ENCODE measurements at regions of chr6 and their contacts with region 1.

Region 1: DNA sequence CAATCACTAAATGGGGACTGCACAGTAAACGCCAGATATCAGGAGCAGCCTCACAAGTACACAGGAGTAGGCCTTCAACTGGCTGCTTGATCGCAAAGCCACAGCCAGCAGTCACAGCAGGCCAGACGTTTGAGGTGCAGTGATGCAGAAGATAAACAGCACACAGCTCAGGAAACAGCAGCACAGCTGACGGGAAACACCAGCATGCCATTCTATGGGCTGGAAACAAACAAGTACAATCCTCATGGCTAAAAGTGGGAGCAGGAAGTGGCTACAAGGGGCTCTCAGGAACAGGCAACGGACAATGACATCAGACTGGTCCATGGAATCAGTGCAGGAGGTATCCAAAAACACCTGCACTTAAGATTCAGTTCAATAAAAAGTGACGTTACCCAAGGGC is 111.0 kb downstream of the DTNBP1 start:
- DNase-seq: peak; percentile 92
- H3K4me3 ChIP-seq: no peak overlapping the region
- H3K27ac ChIP-seq: peak overlapping the region; percentile 62
- H3K4me1 ChIP-seq: peaks cover 42% of the 10 kb centered on the region
- H3K27me3 ChIP-seq: no peaks in the 10 kb centered on the region
- CTCF ChIP-seq: no peak
- POLR2A ChIP-seq: no peak

Region 2: GRCh38 chr6:15504581-15505350 is 47.0 kb before region 1 on chr6:
- CTCF ChIA-PET with region 1: no interaction called
- POLR2A ChIA-PET with region 1: no interaction called
- dilution Hi-C with region 1: no loop called
- intact Hi-C with region 1: loop called (anchors 5 kb)
- DNase-seq: peak; percentile 91
- H3K4me3 ChIP-seq: peak overlapping the region in 1 of 3 experiments; percentile 1
- H3K27ac ChIP-seq: no peak overlapping the region
- H3K4me1 ChIP-seq: peaks cover 11% of the 10 kb centered on the region
- H3K27me3 ChIP-seq: no peaks in the 10 kb centered on the region
- CTCF ChIP-seq: no peak
- POLR2A ChIP-seq: no peak

Region 3: GRCh38 chr6:15608396-15608795 is 56.6 kb after region 1 on chr6:
- CTCF ChIA-PET with region 1: no interaction called
- POLR2A ChIA-PET with region 1: no interaction called
- dilution Hi-C with region 1: no loop called
- intact Hi-C with region 1: loop called (anchors 1 kb)
- DNase-seq: peak; percentile 69
- H3K4me3 ChIP-seq: peak overlapping the region in 1 of 3 experiments; percentile 27
- H3K27ac ChIP-seq: peak overlapping the region; percentile 59
- H3K4me1 ChIP-seq: peaks cover 13% of the 10 kb centered on the region
- H3K27me3 ChIP-seq: no peaks in the 10 kb centered on the region
- CTCF ChIP-seq: no peak
- POLR2A ChIP-seq: no peak

Measured in endothelial cell of umbilical vein (primary cell).